Activated CD8-positive, alpha-beta T cell treated with anti-CD3 and anti-CD28 coated beads for 36 hours (primary cell): ENCODE measurements at regions of chr6 and their contacts with region 1.

Region 1: GRCh38 chr6:83057705-83058321 is 7.8 kb downstream of the UBE3D start:
- DNase-seq: peak; percentile 51
- ATAC-seq: peak; percentile 45
- H3K4me3 Mint-ChIP-seq: no peak overlapping the region
- H3K27ac Mint-ChIP-seq: no peak overlapping the region
- H3K4me1 Mint-ChIP-seq: peaks cover 11% of the 10 kb centered on the region
- H3K27me3 Mint-ChIP-seq: no peaks in the 10 kb centered on the region
- CTCF ChIP-seq: peak; percentile 56

Region 2: DNA sequence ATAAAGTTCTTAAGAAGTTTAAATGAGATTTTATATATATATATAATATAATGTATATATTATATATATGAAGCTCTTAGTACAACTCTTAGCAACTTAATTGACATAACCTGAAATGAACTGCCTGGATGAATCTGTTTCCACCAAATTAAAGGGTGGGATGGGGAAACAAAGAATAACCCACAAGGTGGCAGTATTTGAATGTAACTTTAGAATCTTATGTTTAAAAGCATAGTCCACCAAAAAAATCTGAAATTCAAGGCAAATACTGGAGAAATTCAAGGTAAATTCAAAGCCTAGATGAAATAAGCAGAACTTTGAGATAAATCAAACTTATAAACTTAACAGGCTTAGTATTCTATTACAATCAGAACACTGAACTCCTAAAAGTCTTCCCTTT is 805.9 kb before region 1 on chr6:
- CTCF ChIA-PET with region 1: interaction called, 5 read pairs
- POLR2A ChIA-PET with region 1: no interaction called
- intact Hi-C with region 1: loop called (anchors 5 kb)
- DNase-seq: no peak
- ATAC-seq: no peak
- H3K4me3 Mint-ChIP-seq: no peak overlapping the region
- H3K27ac Mint-ChIP-seq: no peak overlapping the region
- H3K4me1 Mint-ChIP-seq: peaks cover 5% of the 10 kb centered on the region
- H3K27me3 Mint-ChIP-seq: no peaks in the 10 kb centered on the region
- CTCF ChIP-seq: peak; percentile 39

Region 3: DNA sequence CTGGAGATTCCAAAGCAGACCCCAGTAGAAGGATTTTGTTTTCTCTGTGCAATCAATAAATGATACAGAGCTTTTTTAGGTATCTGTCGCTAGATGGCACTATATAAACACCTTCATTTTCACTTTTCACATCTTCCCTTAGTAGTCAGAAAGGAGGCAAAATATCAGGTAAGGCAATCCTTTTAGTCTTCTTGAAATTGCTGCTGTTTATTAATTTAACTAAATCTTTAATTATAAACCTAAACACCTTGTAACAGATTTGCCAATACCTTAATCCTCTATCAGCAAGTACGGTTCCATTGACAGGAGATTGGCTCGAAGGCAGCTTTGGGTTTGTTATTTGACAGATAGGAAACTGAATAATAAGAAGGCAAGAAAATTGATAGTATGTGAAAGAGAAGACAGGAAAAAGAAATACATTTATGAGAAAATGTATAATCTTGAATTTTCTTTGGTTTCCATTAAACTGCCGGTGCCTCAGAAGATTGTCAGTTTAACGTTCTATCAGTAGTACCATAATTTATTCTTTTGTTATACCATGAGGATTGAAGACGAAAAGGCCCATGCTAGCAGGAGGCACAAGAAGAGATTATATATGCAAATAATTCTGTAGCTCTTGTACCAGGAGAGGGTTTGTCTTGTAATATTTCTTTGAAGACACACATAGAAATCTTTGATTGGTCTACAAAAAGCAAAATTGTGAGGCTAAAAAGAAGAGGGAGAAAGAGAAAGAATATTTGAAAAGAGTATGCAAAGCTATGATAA is 786.8 kb before region 1 on chr6:
- CTCF ChIA-PET with region 1: interaction called, 35 read pairs
- POLR2A ChIA-PET with region 1: no interaction called
- intact Hi-C with region 1: loop called (anchors 2 kb)
- DNase-seq: no peak
- ATAC-seq: peak; percentile 34
- H3K4me3 Mint-ChIP-seq: no peak overlapping the region
- H3K27ac Mint-ChIP-seq: no peak overlapping the region
- H3K4me1 Mint-ChIP-seq: no peaks in the 10 kb centered on the region
- H3K27me3 Mint-ChIP-seq: no peaks in the 10 kb centered on the region
- CTCF ChIP-seq: peak; percentile 73

Region 4: DNA sequence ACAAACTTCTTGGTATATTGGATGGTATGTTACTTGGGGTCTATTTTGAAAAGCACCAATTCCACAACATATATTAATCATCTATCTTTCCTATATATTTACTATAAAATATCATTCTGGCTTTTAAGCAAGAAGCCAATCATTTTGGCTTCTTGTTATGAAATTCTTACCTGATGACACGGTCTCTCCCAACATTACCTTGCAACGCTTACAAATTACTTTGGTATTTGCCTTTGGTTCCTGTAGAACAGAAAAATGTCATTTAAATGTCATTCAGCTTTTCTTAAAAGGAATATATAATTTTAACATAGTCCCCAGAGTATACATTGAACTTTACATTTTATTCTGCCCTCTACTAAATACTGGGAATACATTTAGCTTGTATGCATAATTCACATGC is 19.6 kb before region 1 on chr6:
- CTCF ChIA-PET with region 1: no interaction called
- POLR2A ChIA-PET with region 1: no interaction called
- intact Hi-C with region 1: no loop called
- DNase-seq: no peak
- ATAC-seq: no peak
- H3K4me3 Mint-ChIP-seq: no peak overlapping the region
- H3K27ac Mint-ChIP-seq: no peak overlapping the region
- H3K4me1 Mint-ChIP-seq: no peaks in the 10 kb centered on the region
- H3K27me3 Mint-ChIP-seq: no peaks in the 10 kb centered on the region
- CTCF ChIP-seq: no peak